ENCODE measurements at regions of chr10 and their contacts with region 1.

Region 1: DNA sequence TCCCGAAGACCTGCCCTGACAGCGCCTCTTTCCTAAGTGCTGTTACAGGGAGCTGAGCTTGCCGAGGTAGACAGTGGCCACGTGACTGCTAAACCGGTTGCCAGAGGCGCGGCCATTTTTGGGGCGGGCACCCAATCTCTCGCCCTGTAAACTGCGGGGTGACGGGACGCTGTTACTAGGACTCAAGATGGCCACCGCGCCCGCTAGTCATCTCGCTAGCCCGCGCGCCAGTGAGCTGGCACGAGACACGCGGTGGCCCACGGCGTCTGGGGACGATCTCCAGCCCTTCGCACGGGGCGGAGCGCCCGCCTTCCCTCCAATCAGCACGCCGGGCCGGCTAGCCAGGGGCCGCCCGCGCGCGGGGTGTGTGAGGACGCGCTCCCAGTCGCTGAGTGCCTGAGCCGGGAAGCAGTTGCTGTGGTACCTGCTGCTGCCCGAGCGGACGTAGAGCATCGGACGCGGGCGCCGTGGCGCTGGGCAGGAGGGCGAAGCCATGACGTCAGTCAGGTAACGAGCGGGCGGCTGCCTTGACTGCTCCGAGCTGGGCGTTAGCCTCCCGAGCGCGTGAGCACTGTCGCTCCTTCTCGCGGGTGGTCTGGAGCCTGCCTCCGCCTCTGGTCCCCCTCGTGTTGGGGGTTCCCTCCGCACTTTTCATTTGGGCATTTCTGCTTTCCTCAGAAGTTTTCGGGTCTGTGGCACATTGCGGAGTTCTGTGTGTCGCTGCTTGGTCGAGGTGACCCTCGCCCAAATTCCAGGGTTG is 25.5 kb downstream of the ADK start:
- DNase-seq: peak; percentile 96
- H3K4me3 Mint-ChIP-seq: peak overlapping the region; percentile 92
- H3K27ac Mint-ChIP-seq: peak overlapping the region; percentile 97
- H3K4me1 Mint-ChIP-seq: peaks cover 43% of the 10 kb centered on the region
- H3K27me3 Mint-ChIP-seq: no peaks in the 10 kb centered on the region

Region 2: DNA sequence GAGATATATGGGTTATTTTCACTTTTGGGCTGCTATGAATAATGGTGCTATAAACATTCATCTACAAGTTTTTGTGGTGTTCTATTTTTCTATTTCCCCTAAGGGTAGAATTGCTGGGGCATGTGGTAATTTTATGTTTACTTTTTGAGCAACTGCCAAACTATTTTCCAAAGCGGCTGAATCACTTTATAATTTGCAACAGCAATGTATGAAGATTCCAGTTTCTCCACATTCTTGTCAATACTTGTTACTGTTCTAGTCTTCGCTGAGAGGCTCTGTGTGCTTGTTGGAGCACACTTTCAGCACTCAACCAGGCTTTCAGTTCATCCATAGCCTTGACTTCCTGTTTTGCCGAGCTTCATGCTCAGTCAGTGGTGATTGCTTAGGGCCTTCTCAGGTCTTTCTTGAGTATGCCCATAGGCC is 13.4 kb after region 1 on chr10:
- intact Hi-C with region 1: loop called (anchors 1 kb)
- DNase-seq: no peak
- H3K4me3 Mint-ChIP-seq: peak overlapping the region; percentile 65
- H3K27ac Mint-ChIP-seq: peak overlapping the region; percentile 95
- H3K4me1 Mint-ChIP-seq: peaks cover 52% of the 10 kb centered on the region
- H3K27me3 Mint-ChIP-seq: no peaks in the 10 kb centered on the region